GM12878 (cell line): ENCODE measurements at regions of chr1 and their contacts with region 1.

Region 1: DNA sequence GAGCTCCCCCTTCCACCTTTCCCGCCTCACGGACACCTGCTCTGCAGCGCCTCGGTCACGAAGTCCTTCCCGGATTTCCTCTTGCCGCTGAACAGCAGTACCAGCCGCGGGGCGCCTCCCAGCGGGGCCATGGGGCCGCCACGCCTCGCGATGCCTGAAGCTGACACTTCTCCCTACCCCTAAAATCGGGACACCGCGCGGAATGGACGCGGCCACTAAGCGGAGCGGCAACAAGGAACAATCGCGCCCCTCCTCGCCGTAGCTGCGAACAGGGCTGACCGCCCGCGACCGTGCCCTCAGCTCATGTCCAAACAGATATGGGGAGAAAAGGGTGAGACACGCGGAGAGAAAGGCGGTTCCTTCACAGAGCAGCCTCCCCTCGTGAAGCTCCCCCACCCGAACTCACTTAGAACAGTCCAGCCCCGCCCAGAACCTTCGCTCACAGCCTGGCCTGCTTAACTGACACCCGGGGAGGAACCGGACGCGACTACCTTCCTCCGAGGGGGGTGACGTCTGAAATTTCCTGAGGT is at the start of gene PMVK:
- DNase-seq: peak; percentile 84
- ATAC-seq: peak; percentile 79
- H3K4me3 ChIP-seq: peak within 1 kb of the TSS; percentile 87
- H3K27ac ChIP-seq: peak within 1 kb of the TSS; percentile 100
- H3K4me1 ChIP-seq: peaks cover 38% of the 10 kb centered on the region
- H3K27me3 ChIP-seq: no peaks in the 10 kb centered on the region
- CTCF ChIP-seq: peak; percentile 24 to 47 (median 41); a peak in 4 of 6 replicates
- EP300 ChIP-seq: peak; percentile 23 to 37; a peak in 3 of 4 replicates
- POLR2A ChIP-seq: peak; percentile 95
- RAD21 ChIP-seq: peak; percentile 7; the same call in 1 of the 2 replicates
- polyA plus RNA-seq, gene PMVK: 6.0 to 28.8 TPM

Region 2: DNA sequence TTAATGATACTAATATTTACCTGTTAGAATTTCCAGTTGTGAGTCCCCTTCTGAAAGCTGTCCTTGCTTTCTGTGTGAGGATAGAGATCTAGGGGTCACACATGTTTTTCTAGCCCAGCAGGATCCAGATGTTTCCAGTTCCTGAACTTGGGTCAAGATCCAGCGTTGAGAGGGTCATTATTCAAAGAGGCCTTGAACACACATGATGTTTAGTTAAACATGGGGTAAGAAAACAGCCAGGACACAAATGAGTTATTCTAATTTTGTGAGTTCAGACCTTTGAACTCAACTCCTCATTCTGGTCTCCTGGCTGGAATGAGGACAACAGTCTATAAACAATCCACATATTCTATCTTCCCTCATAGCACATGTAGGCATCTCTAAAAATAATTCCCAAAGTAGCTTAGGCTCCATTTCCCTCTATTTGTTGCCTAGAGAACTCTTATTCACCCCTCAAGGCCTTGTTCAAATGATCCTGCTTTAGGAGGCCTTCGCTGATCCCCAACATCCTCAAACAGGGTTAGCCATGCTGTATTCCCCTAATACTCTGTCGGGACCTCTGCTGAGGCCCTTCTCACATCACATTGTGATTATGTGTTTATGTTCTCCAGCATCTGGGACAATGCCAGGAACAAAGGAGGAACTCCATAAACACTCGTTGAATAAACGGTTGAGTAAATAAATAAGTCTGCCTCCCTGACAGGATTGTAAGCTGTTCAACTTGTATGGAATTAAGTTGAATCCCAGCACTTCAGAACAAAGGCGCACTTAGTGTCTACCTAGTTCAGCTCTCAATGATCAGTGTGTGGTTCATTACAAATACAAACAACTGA is 51.5 kb before region 1 on chr1:
- CTCF ChIA-PET with region 1: interaction called, 10 read pairs
- POLR2A ChIA-PET with region 1: interaction called, 6 read pairs
- RAD21 ChIA-PET with region 1: interaction called, 5 read pairs
- SMC1A ChIA-PET with region 1: interaction called, 14 read pairs
- in situ Hi-C with region 1: no loop called
- intact Hi-C with region 1: no loop called
- DNase-seq: no peak
- ATAC-seq: no peak
- H3K4me3 ChIP-seq: no peak overlapping the region
- H3K27ac ChIP-seq: no peak overlapping the region
- H3K4me1 ChIP-seq: peaks cover 6% of the 10 kb centered on the region
- H3K27me3 ChIP-seq: no peaks in the 10 kb centered on the region
- CTCF ChIP-seq: no peak
- EP300 ChIP-seq: no peak
- POLR2A ChIP-seq: no peak
- RAD21 ChIP-seq: no peak

Region 3: DNA sequence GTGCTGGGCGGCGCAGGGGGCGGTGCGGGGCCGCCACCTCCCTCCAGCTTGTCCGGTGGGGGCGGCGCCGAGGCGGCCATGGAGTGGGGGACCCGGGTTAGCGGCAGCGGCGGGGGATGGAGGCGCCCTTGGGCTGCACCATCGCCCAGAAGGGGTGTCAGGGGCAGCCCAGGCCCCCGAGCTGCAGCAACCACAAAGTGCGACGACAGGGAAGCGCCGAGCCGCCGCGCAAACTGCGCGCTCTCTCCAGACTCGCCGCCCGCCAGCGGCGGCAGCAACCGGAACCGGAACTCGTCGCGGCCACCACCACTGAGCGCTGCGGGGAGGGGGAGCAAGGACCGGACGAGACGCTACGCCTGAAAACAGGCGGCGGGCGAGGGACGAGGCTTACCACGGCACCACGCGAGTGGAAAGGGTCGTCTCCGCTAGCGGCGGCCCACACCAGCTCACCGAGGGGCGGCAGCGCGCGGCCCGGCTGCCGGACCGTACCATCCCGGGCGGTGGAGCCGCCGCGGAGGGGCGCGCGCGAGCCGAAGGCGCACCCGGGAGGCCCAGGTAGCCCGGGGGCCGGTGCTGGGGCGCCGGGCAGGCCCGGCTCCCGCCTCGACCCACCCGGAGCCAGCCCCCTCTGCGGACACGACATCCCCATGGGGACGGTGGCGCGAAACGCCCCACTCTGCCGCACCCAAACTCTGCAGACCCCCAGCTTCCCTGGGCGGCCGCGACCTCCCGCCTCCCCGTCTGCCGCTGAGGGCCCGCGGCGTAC is 25.1 kb after region 1 on chr1 and contains the start of gene PYGO2:
- CTCF ChIA-PET with region 1: interaction called, 10 read pairs
- POLR2A ChIA-PET with region 1: interaction called, 11 read pairs
- RAD21 ChIA-PET with region 1: interaction called, 5 read pairs
- SMC1A ChIA-PET with region 1: interaction called, 3 read pairs
- in situ Hi-C with region 1: no loop called
- intact Hi-C with region 1: loop called (anchors 2 kb)
- DNase-seq: no peak
- ATAC-seq: peak; percentile 94
- H3K4me3 ChIP-seq: peak within 1 kb of the TSS; percentile 88
- H3K27ac ChIP-seq: peak within 1 kb of the TSS; percentile 97
- H3K4me1 ChIP-seq: peaks cover 7% of the 10 kb centered on the region
- H3K27me3 ChIP-seq: no peaks in the 10 kb centered on the region
- CTCF ChIP-seq: peak; percentile 44 to 73 (median 52); a peak in 5 of 6 replicates
- EP300 ChIP-seq: no peak
- POLR2A ChIP-seq: peak; percentile 95
- RAD21 ChIP-seq: peak; percentile 38
- polyA plus RNA-seq, gene PYGO2: 8.1 to 8.3 TPM

Region 4: DNA sequence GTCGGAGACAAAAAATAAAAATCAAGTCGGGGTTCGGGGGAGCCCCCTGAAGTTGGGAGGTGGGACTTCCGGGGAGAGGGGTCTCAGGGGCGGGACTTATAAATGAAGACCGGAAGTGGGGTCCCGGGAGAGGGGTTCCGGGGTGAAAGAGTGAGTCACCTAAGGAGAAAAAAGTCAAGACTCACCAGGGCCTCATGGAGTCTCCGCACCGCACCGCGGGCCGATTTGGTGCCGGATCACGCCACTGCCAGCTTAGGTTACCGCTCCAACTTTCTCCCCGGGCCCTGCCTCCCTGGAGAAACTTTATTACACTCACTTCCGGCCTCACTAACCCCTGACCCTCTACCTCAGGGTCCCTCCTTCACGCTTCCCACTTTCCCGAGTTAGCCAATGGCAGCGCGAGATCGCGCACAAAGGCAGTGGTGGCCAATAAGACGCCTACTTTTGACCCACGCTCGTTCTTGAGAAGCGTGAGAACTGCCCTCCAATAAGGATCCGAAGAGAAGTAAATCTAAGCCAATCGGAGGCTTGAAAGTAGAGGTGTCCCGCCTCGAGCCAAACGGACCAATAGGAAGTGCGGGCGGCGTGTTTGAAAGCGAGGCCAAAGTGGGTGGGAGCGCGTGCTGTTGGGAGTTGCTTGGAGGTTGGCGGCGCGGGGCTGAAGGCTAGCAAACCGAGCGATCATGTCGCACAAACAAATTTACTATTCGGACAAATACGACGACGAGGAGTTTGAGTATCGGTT is 37.6 kb after region 1 on chr1 and contains the start of gene CKS1B:
- CTCF ChIA-PET with region 1: interaction called, 7 read pairs
- POLR2A ChIA-PET with region 1: interaction called, 10 read pairs
- RAD21 ChIA-PET with region 1: interaction called, 4 read pairs
- SMC1A ChIA-PET with region 1: interaction called, 4 read pairs
- in situ Hi-C with region 1: no loop called
- intact Hi-C with region 1: no loop called
- DNase-seq: peak; percentile 100
- ATAC-seq: peak; percentile 87
- H3K4me3 ChIP-seq: peak within 1 kb of the TSS; percentile 90
- H3K27ac ChIP-seq: peak within 1 kb of the TSS; percentile 96
- H3K4me1 ChIP-seq: peaks cover 28% of the 10 kb centered on the region
- H3K27me3 ChIP-seq: no peaks in the 10 kb centered on the region
- CTCF ChIP-seq: no peak
- EP300 ChIP-seq: no peak
- POLR2A ChIP-seq: peak; percentile 85
- RAD21 ChIP-seq: no peak
- polyA plus RNA-seq, gene CKS1B: 598 to 608 TPM

Region 5: GRCh38 chr1:154982897-154983648 is 46.5 kb after region 1 on chr1 and contains the start of gene FLAD1:
- CTCF ChIA-PET with region 1: interaction called, 5 read pairs
- POLR2A ChIA-PET with region 1: interaction called, 17 read pairs
- RAD21 ChIA-PET with region 1: interaction called, 3 read pairs
- SMC1A ChIA-PET with region 1: interaction called, 4 read pairs
- in situ Hi-C with region 1: no loop called
- intact Hi-C with region 1: no loop called
- DNase-seq: peak; percentile 100
- ATAC-seq: peak; percentile 100
- H3K4me3 ChIP-seq: peak within 1 kb of the TSS; percentile 96
- H3K27ac ChIP-seq: peak within 1 kb of the TSS; percentile 79
- H3K4me1 ChIP-seq: peaks cover 6% of the 10 kb centered on the region
- H3K27me3 ChIP-seq: no peaks in the 10 kb centered on the region
- CTCF ChIP-seq: no peak
- EP300 ChIP-seq: no peak
- POLR2A ChIP-seq: peak; percentile 66
- RAD21 ChIP-seq: no peak
- polyA plus RNA-seq, gene FLAD1: 22.9 to 30.1 TPM

Region 6: DNA sequence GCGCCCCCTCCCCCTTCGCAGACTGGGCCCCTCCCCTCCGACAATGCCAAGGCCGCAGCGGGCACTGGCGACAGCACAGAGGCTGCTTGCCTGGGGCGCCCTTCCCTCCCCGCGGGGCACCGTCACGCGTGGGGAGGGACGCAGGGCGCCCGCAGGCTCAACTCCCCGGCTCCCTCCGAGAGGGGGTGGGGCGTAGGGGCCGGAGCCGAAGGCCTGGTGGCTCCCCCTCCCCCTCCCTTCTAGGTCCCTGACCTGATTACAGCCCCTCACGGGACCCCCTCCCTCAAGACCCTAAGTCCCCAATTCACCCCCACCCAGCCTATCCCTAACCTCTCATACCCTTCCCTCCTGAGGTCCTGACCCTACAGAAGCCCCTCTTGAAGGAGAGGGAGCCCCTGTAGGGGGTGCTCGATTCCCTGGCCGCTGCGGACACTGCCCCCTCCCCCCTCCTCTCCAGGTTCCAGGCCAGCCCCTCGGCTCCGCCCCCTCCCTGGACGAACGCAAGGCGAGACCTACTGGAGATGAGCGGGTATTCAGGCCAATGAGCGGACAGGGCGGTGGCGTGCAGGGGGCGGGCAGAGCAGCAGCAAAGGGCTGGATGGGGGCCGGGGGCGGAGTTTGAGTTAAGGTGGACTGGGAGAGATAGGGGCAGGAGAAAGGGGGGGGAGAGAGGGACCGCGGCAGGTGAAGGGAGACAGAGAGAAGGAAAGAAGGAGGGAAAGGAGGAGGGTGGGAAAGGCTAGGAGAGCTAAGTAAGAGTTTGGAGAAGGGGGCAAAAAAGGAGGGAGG is 65.2 kb after region 1 on chr1:
- CTCF ChIA-PET with region 1: interaction called, 16 read pairs
- POLR2A ChIA-PET with region 1: interaction called, 5 read pairs
- RAD21 ChIA-PET with region 1: interaction called, 6 read pairs
- SMC1A ChIA-PET with region 1: interaction called, 3 read pairs
- in situ Hi-C with region 1: no loop called
- intact Hi-C with region 1: loop called (anchors 2 kb)
- DNase-seq: peak; percentile 94
- ATAC-seq: peak; percentile 76
- H3K4me3 ChIP-seq: peak overlapping the region; percentile 98
- H3K27ac ChIP-seq: peak overlapping the region; percentile 79
- H3K4me1 ChIP-seq: peaks cover 39% of the 10 kb centered on the region
- H3K27me3 ChIP-seq: no peaks in the 10 kb centered on the region
- CTCF ChIP-seq: peak; percentile 37 to 53 (median 51); a peak in 5 of 6 replicates
- EP300 ChIP-seq: no peak
- POLR2A ChIP-seq: peak; percentile 1; the same call in 1 of the 2 replicates
- RAD21 ChIP-seq: peak; percentile 32; the same call in 1 of the 2 replicates

Region 7: GRCh38 chr1:155017041-155017945 is 80.7 kb after region 1 on chr1:
- CTCF ChIA-PET with region 1: interaction called, 9 read pairs
- POLR2A ChIA-PET with region 1: interaction called, 10 read pairs
- RAD21 ChIA-PET with region 1: interaction called, 5 read pairs
- SMC1A ChIA-PET with region 1: no interaction called
- in situ Hi-C with region 1: no loop called
- intact Hi-C with region 1: no loop called
- DNase-seq: peak; percentile 47
- ATAC-seq: peak; percentile 98
- H3K4me3 ChIP-seq: peak overlapping the region; percentile 65
- H3K27ac ChIP-seq: peak overlapping the region; percentile 75
- H3K4me1 ChIP-seq: peaks cover 23% of the 10 kb centered on the region
- H3K27me3 ChIP-seq: no peaks in the 10 kb centered on the region
- CTCF ChIP-seq: peak; percentile 99 to 100 (median 100); a peak in 5 of 6 replicates
- EP300 ChIP-seq: 0 out of 4 replicates have a peak, but pooled peaks of 1 of the 2 experiments have one; percentile 26
- POLR2A ChIP-seq: peak; percentile 69
- RAD21 ChIP-seq: peak; percentile 64

Region 8: GRCh38 chr1:155167166-155168104 is 230.8 kb after region 1 on chr1:
- CTCF ChIA-PET with region 1: no interaction called
- POLR2A ChIA-PET with region 1: no interaction called
- RAD21 ChIA-PET with region 1: no interaction called
- SMC1A ChIA-PET with region 1: no interaction called
- in situ Hi-C with region 1: no loop called
- intact Hi-C with region 1: no loop called
- DNase-seq: no peak
- ATAC-seq: peak; percentile 93
- H3K4me3 ChIP-seq: no peak overlapping the region
- H3K27ac ChIP-seq: no peak overlapping the region
- H3K4me1 ChIP-seq: peaks cover 9% of the 10 kb centered on the region
- H3K27me3 ChIP-seq: no peaks in the 10 kb centered on the region
- CTCF ChIP-seq: peak; percentile 88 to 98 (median 94)
- EP300 ChIP-seq: no peak
- POLR2A ChIP-seq: no peak
- RAD21 ChIP-seq: peak; percentile 96